Panc1 (cell line): ENCODE measurements at regions of chr5 and their contacts with region 1.

Region 1: GRCh38 chr5:133051580-133052332 is at the start of gene HSPA4:
- DNase-seq: peak; percentile 95
- ATAC-seq: peak; percentile 88
- H3K4me3 ChIP-seq: peak within 1 kb of the TSS; percentile 94 to 96
- H3K27ac ChIP-seq: peak within 1 kb of the TSS; percentile 99
- H3K4me1 ChIP-seq: peaks cover 47% of the 10 kb centered on the region
- H3K27me3 ChIP-seq: no peaks in the 10 kb centered on the region
- CTCF ChIP-seq: no peak
- total RNA-seq, gene HSPA4: 247 TPM

Region 2: GRCh38 chr5:132963175-132964104 is 88.3 kb before region 1 on chr5 and contains the start of gene AFF4:
- CTCF ChIA-PET with region 1: no interaction called
- POLR2A ChIA-PET with region 1: interaction called, 4 read pairs
- in situ Hi-C with region 1: no loop called
- intact Hi-C with region 1: loop called (anchors 5 kb)
- DNase-seq: peak; percentile 67
- ATAC-seq: peak; percentile 98
- H3K4me3 ChIP-seq: peak within 1 kb of the TSS; percentile 79 to 86
- H3K27ac ChIP-seq: peak within 1 kb of the TSS; percentile 97
- H3K4me1 ChIP-seq: peaks cover 12% of the 10 kb centered on the region
- H3K27me3 ChIP-seq: no peaks in the 10 kb centered on the region
- CTCF ChIP-seq: no peak
- total RNA-seq, gene AFF4: 78.3 TPM

Region 3: DNA sequence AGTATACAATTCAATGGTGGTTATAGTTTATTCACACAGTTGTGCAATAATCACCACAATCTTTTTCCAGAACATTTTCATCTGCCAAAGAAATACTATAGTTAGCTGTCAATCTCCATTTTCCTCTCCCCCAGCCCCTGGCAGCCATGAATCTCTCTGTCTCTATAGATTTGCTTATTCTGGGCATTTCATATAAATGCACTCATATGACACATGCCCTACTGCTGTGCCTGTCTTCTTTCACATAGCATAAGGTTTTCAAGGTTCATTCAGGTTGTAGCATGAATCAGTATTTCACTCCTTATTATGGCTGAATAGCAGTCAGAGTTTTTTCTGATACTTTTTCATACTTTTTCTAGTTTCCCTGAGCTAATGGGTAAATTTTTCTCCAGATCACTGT is 127.6 kb after region 1 on chr5:
- CTCF ChIA-PET with region 1: no interaction called
- POLR2A ChIA-PET with region 1: no interaction called
- in situ Hi-C with region 1: no loop called
- intact Hi-C with region 1: no loop called
- DNase-seq: no peak
- ATAC-seq: no peak
- H3K4me3 ChIP-seq: no peak overlapping the region
- H3K27ac ChIP-seq: no peak overlapping the region
- H3K4me1 ChIP-seq: no peaks in the 10 kb centered on the region
- H3K27me3 ChIP-seq: no peaks in the 10 kb centered on the region
- CTCF ChIP-seq: no peak

Region 4: DNA sequence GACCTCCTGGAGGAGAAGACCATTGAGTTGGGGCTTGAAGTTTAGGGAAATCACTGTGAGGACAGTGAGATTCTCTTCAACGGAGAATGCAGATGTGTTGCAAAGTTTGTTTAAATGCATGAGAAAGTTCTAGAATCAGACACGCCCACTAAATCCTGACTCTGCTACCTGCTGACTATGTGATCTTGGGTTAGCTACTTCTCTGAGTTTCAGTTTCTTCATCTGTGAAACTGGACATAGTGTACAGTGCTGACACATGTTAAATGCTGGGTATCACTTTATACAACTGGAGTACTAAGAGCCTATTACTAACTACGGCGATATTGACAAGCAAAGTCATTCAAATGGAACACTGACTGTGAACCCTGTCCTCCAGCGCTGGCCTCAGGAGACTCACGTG is 255.5 kb after region 1 on chr5:
- CTCF ChIA-PET with region 1: no interaction called
- POLR2A ChIA-PET with region 1: interaction called, 10 read pairs
- in situ Hi-C with region 1: no loop called
- intact Hi-C with region 1: no loop called
- DNase-seq: no peak
- ATAC-seq: no peak
- H3K4me3 ChIP-seq: no peak overlapping the region
- H3K27ac ChIP-seq: no peak overlapping the region
- H3K4me1 ChIP-seq: no peaks in the 10 kb centered on the region
- H3K27me3 ChIP-seq: peaks cover 3% of the 10 kb centered on the region; the same call in 1 of the 2 replicates
- CTCF ChIP-seq: no peak

Region 5: DNA sequence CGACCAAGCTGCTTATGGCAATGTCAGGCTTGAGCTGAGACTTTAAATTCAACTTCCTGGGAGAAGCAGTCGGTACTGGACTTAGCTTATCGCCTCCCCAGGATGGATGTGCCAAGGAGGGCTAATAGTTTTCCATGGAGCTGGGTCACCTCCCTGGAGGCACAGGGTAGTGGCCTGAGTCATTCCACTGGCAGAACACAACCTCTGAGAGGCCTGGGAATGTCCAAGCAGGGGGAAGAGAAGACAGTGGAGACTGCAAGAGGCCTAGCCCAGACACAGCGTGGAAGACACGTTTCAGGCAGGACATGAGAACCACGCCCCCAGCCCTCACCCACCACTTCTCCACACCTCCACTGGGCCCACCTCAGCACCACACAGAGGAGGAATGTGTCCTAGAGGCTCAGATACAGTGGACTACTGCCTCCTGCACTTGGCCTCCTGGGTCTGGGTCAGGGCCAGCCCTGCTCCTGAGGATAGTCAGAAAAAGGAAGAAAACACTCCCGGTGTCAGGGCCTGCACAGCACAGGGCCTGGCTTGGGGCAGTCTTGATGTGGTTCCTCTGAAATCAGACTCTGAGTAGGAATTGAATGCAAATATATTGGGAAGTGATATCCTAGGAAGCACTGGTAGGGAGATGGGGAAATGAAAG is 388.8 kb after region 1 on chr5:
- CTCF ChIA-PET with region 1: no interaction called
- POLR2A ChIA-PET with region 1: no interaction called
- in situ Hi-C with region 1: no loop called
- intact Hi-C with region 1: no loop called
- DNase-seq: no peak
- ATAC-seq: no peak
- H3K4me3 ChIP-seq: no peak overlapping the region
- H3K27ac ChIP-seq: no peak overlapping the region
- H3K4me1 ChIP-seq: no peaks in the 10 kb centered on the region
- H3K27me3 ChIP-seq: peaks cover 6% of the 10 kb centered on the region; the same call in 1 of the 2 replicates
- CTCF ChIP-seq: no peak